Activated CD4-positive, alpha-beta T cell treated with anti-CD3 and anti-CD28 coated beads, Interleukin-2, amount 10 ng/mL, durations not matched to agents 24 days and 14 days (primary cell): ENCODE measurements at regions of chr2 and their contacts with region 1.

Region 1: GRCh38 chr2:127081826-127082633 is 24.9 kb downstream of the BIN1 start:
- DNase-seq: peak; percentile 94
- H3K4me3 Mint-ChIP-seq: peak overlapping the region; percentile 89
- H3K27ac Mint-ChIP-seq: peak overlapping the region; percentile 94
- H3K4me1 Mint-ChIP-seq: peaks cover 64% of the 10 kb centered on the region
- H3K27me3 Mint-ChIP-seq: no peaks in the 10 kb centered on the region

Region 2: DNA sequence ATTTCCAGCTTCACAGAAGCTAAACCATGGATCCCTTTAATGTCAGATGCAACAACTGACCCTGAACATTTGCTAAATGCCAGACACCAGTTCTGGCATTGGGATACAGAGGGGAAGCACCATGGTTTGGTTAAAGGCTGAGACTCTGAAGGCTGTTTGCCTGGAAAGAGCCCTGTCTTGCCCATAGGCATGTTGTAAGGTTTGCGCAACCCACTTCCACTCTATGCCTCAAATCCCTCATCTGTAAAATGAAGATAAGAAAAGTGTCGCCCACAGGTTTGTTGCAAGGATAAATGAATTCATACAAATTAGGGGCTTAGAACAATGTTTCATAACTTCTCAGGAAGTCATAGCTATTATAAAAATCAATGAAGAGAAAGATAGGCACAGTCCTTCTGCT is 806.9 kb before region 1 on chr2:
- intact Hi-C with region 1: no loop called
- DNase-seq: no peak
- H3K4me3 Mint-ChIP-seq: no peak overlapping the region
- H3K27ac Mint-ChIP-seq: no peak overlapping the region
- H3K4me1 Mint-ChIP-seq: no peaks in the 10 kb centered on the region
- H3K27me3 Mint-ChIP-seq: no peaks in the 10 kb centered on the region

Region 3: GRCh38 chr2:126657636-126658318 is 424.3 kb before region 1 on chr2:
- intact Hi-C with region 1: loop called (anchors 5 kb)
- DNase-seq: peak; percentile 92
- H3K4me3 Mint-ChIP-seq: peak overlapping the region; percentile 92
- H3K27ac Mint-ChIP-seq: peak overlapping the region; percentile 98
- H3K4me1 Mint-ChIP-seq: peaks cover 55% of the 10 kb centered on the region
- H3K27me3 Mint-ChIP-seq: no peaks in the 10 kb centered on the region

Region 4: GRCh38 chr2:127064642-127065250 is 17.3 kb before region 1 on chr2:
- intact Hi-C with region 1: loop called (anchors 1 kb)
- DNase-seq: peak; percentile 86
- H3K4me3 Mint-ChIP-seq: no peak overlapping the region
- H3K27ac Mint-ChIP-seq: peak overlapping the region; percentile 84
- H3K4me1 Mint-ChIP-seq: peaks cover 18% of the 10 kb centered on the region
- H3K27me3 Mint-ChIP-seq: no peaks in the 10 kb centered on the region

Region 5: GRCh38 chr2:127106951-127107621 is 25.1 kb after region 1 on chr2 and contains the start of gene BIN1:
- intact Hi-C with region 1: loop called (anchors 1 kb)
- DNase-seq: peak; percentile 95
- H3K4me3 Mint-ChIP-seq: peak within 1 kb of the TSS; percentile 84
- H3K27ac Mint-ChIP-seq: no peak within 1 kb of the TSS
- H3K4me1 Mint-ChIP-seq: peaks cover 6% of the 10 kb centered on the region
- H3K27me3 Mint-ChIP-seq: peaks cover 31% of the 10 kb centered on the region
- total RNA-seq, gene BIN1: 38.3 and 39.7 TPM in 2 replicates

Region 6: DNA sequence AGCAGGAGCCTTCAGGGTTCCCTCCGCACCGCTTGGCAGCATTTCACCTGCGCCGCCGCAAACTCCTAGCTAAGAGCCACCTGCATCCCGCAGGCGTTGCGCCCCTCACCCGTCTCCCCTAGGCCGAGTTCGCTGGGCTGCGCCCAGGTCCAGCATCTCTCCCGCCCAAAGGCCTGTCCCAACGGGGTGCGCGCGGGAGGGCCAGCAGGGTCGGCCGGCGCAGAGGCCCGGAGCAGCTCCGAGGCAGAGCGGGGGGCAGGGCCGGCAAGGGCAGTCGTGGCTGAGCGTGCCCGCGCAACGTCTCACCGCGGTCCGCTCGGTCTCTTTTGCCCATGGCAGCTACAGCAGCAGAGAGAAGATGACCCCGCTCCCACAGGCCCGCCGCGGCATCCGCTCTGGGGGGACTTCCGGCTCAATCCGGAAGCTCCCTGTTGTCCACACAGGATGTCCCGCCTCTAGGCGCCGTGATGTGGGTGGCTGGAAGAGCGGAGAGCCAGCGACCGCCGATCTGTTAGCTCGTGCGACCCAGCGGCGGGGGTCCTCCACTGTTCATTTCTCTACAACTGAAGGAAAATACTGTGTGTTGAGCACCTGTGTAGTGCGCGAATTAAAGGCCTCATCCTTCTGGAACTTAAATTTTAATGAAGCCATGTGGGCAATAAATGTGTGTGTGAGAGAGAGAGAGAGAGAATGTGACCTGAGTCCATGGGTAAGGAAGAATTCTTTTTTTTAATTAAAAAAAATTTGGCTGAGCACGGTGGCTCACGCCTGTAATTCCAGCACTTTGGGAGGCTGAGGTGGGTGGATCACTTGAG is 211.9 kb after region 1 on chr2 and contains the start of gene ERCC3:
- intact Hi-C with region 1: loop called (anchors 5 kb)
- DNase-seq: peak; percentile 95
- H3K4me3 Mint-ChIP-seq: peak within 1 kb of the TSS; percentile 99
- H3K27ac Mint-ChIP-seq: peak within 1 kb of the TSS; percentile 98
- H3K4me1 Mint-ChIP-seq: peaks cover 23% of the 10 kb centered on the region
- H3K27me3 Mint-ChIP-seq: no peaks in the 10 kb centered on the region
- total RNA-seq, gene ERCC3: 58.1 and 60.2 TPM in 2 replicates

Region 7: DNA sequence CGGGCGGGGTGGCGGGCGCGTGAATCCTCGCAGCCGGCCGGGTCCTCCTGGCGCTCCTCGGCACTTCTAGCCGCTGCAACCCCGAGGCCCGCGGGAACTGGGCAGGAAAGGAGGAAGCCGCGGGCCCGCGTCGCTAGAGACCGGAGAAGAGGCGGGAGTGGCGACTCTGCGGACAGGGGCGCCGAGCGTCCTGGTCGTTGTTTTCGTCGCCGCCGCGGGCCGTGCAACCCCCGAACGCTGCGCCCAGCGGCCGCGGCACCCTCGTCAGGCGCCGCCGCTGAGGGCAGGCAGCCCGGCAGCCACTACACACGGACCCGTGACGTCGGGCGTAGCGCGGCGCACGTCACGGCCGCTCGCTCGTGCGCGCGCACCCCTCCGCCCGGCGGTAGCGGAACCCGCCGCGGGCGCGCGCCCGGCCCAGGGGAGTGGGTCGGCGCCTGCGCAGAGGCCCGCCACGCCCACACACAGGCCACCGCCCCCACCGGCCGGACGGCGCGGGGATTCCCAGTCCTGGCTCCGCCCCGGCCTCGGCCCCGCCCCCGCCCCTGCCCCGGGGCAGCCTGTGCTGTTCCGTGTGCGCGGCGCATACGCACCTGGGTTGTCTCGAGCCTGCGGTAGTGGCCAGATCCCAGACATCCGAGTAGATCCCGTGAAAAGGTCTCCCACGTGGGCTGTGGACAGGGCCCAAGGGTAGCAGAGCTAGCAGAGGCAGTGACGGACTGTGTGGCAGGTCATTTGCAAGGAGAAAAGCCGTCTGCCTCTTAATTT is 305.8 kb after region 1 on chr2 and contains the start of gene MAP3K2:
- intact Hi-C with region 1: loop called (anchors 5 kb)
- DNase-seq: peak; percentile 98
- H3K4me3 Mint-ChIP-seq: peak within 1 kb of the TSS; percentile 88
- H3K27ac Mint-ChIP-seq: peak within 1 kb of the TSS; percentile 98
- H3K4me1 Mint-ChIP-seq: peaks cover 63% of the 10 kb centered on the region
- H3K27me3 Mint-ChIP-seq: no peaks in the 10 kb centered on the region
- total RNA-seq, gene MAP3K2: 53.7 and 57.5 TPM in 2 replicates

Region 8: DNA sequence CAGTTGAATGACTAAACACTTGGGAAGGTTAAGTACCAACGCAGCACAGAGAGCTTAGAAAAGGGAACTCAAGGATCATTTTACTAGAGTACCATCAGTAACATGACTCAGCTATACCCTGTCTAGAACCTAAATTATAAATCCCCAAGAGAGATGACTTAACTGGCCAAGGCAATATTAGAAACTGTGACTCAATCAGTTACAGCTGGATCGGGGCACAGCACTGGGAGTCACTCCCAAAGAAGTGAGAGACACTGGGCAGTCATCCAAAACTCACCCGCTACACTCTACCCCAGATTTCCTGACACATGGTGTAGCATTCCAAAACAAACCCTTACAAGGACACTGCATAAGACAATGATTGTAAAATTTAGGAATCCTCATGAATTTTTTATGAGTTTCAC is 426.6 kb after region 1 on chr2:
- intact Hi-C with region 1: no loop called
- DNase-seq: no peak
- H3K4me3 Mint-ChIP-seq: no peak overlapping the region
- H3K27ac Mint-ChIP-seq: no peak overlapping the region
- H3K4me1 Mint-ChIP-seq: peaks cover 37% of the 10 kb centered on the region
- H3K27me3 Mint-ChIP-seq: no peaks in the 10 kb centered on the region

Region 9: DNA sequence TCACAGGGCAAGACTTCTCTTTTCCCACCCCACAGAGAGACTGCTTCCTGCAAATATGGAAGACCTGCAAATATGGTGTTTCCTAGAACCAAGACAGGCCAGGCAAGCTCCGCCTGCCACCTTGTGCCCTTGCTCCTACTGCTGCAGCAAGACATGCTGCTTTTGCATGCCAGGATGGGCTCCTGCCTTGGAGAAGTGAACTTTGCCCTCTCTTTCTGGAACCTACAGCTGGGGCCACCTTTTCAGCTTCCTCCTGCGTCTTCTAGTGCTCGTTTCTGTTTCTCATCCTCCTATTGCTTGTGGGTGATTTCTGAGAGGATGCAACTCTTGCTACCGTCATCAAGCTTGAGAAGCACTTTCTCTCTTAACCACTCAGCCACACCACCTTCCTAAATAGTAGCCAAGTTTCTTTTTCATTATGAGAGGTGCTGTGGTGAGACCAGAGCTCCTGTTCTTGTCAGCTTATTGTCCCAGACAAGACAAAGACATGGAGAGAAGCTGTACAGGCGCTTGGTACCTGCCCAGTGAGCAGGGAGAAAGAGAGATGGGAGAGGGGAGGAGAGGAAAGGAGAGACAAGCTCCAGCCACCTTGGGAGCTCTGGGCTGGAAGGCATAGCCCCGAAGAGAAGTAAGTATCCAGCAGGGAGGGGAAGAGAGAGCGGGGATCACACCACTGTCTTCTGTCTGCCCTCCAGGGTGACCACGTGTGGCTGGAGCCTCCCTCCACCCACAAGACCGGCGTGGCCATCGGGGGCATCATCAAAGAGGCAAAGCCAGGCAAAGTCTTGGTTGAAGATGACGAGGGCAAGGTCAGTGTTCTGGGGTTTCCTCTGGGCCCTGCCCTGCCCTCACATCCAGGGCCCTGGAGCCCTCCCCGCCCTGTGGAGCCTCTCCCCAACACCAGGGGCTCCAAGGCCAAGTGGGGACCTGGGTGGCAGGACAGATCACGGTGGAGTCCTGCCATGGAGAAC is 481.7 kb after region 1 on chr2:
- intact Hi-C with region 1: loop called (anchors 5 kb)
- DNase-seq: peak; percentile 84
- H3K4me3 Mint-ChIP-seq: peak overlapping the region; percentile 64
- H3K27ac Mint-ChIP-seq: peak overlapping the region; percentile 69
- H3K4me1 Mint-ChIP-seq: peaks cover 16% of the 10 kb centered on the region
- H3K27me3 Mint-ChIP-seq: peaks cover 43% of the 10 kb centered on the region